Activated CD8-positive, alpha-beta T cell treated with anti-CD3 and anti-CD28 coated beads, Interleukin-2, amount 10 ng/mL, durations not matched to agents 7 days and 5 days (primary cell): ENCODE measurements at regions of chr14 and their contacts with region 1.

Region 1: DNA sequence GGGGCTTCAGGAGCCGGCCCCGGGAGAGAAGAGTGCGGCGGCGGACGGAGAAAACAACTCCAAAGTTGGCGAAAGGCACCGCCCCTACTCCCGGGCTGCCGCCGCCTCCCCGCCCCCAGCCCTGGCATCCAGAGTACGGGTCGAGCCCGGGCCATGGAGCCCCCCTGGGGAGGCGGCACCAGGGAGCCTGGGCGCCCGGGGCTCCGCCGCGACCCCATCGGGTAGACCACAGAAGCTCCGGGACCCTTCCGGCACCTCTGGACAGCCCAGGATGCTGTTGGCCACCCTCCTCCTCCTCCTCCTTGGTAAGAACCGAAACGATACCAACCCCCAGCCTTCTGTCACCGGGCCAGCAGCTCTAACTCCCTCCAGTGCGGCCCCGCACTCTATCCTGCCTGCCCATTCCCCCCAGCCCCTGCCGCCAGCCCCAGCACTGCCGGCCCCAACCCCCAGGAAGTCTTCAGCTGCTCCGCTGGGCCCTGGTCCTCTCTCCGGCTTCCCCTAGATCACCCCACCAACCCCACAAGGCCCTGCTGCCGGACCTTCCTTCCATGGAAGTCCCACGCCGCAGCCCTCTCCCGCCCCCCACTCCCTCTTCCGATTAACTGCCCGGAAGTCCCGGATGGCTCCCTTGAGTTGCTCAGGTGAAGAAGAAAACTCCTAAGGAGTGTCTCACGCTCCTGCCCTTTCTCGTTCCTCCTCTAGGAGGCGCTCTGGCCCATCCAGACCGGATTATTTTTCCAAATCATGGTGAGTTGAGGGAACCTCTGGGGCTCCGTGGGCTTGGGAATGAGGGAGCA is 693 bp downstream of the LRP10 start:
- DNase-seq: peak; percentile 78
- ATAC-seq: peak; percentile 52
- H3K4me3 Mint-ChIP-seq: peak overlapping the region; percentile 84
- H3K27ac Mint-ChIP-seq: peak overlapping the region; percentile 97
- H3K4me1 Mint-ChIP-seq: peaks cover 24% of the 10 kb centered on the region
- H3K27me3 Mint-ChIP-seq: no peaks in the 10 kb centered on the region

Region 2: GRCh38 chr14:22791301-22791700 is 80.9 kb before region 1 on chr14:
- CTCF ChIA-PET with region 1: no interaction called
- POLR2A ChIA-PET with region 1: no interaction called
- DNase-seq: no peak
- ATAC-seq: no peak
- H3K4me3 Mint-ChIP-seq: no peak overlapping the region
- H3K27ac Mint-ChIP-seq: no peak overlapping the region
- H3K4me1 Mint-ChIP-seq: peaks cover 4% of the 10 kb centered on the region
- H3K27me3 Mint-ChIP-seq: peaks cover 12% of the 10 kb centered on the region

Region 3: DNA sequence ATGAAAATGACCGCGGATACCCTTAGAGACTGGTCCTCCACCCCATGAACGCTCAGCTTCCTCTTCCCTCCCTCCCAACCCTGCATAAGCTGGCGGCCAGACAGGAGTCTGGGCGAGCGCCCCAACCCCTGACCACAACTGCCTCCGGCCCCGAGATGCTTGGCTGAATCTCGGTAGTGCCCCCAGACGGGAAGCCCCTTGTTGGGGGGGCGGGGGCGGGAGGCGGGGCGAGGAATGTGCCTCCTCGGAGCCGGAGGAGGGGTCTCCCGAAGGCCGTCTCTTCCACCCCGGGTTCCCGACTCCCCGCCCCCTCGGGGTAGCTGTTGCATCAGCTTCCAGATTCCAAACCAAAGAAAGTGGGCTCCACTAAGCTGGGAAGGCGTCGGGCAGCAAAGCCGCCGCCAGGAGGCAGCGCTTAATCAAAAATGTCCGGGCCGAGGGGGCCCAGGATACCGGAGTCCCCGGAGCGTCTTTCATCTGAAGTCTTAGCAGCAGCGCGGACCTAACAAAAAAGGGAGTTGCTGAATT is 49.6 kb before region 1 on chr14:
- CTCF ChIA-PET with region 1: interaction called, 590 read pairs
- POLR2A ChIA-PET with region 1: interaction called, 3 read pairs
- DNase-seq: peak; percentile 79
- ATAC-seq: peak; percentile 89
- H3K4me3 Mint-ChIP-seq: peak overlapping the region; percentile 39
- H3K27ac Mint-ChIP-seq: no peak overlapping the region
- H3K4me1 Mint-ChIP-seq: peaks cover 32% of the 10 kb centered on the region
- H3K27me3 Mint-ChIP-seq: peaks cover 24% of the 10 kb centered on the region

Region 4: DNA sequence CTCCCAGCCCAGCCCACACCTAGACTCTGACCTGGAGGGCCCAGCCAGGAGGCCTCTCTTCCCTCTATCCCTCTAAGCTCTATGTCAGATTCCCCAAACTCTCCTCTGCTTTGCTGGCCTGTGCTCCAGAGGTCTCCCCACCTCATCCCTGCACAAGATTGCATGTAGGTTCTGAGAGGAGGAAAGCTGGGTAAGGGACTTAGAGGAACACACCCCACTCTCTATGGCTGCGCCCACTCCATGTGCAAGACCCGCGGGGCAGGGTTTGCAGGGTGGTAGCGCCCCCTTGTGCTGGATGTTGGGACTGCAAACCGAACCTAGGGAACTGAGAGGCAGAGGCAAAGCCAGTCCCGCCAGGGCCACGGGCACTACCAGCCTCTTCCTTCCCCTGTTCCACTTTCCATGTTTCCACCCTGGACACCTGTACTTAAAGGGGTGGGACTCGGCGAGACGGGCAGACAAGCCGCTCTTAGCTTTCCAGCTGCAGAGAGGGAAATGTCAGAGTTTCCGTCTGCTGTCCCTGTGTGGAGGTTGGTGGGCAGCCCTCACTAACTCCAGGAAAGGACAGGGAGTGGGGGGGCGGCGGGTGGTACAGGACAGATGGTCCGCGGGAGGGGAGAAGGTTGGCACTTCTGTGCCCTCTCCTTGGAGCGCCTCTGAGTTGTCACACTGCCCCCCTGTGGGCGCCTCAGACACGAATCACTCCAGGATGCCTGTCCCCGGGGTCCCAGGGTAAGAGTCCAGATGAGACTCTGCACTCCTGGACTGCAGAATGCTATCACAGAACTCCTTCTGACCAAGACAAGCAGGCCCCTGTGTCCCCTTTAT is 19.1 kb before region 1 on chr14:
- CTCF ChIA-PET with region 1: interaction called, 89 read pairs
- POLR2A ChIA-PET with region 1: no interaction called
- DNase-seq: peak; percentile 91
- ATAC-seq: peak; percentile 87
- H3K4me3 Mint-ChIP-seq: peak overlapping the region; percentile 72
- H3K27ac Mint-ChIP-seq: peak overlapping the region; percentile 61
- H3K4me1 Mint-ChIP-seq: peaks cover 44% of the 10 kb centered on the region
- H3K27me3 Mint-ChIP-seq: peaks cover 18% of the 10 kb centered on the region

Region 5: GRCh38 chr14:22900081-22900799 is 28.0 kb after region 1 on chr14:
- CTCF ChIA-PET with region 1: interaction called, 22 read pairs
- POLR2A ChIA-PET with region 1: interaction called, 8 read pairs
- DNase-seq: peak; percentile 68
- ATAC-seq: peak; percentile 75
- H3K4me3 Mint-ChIP-seq: no peak overlapping the region
- H3K27ac Mint-ChIP-seq: peak overlapping the region; percentile 4
- H3K4me1 Mint-ChIP-seq: peaks cover 13% of the 10 kb centered on the region
- H3K27me3 Mint-ChIP-seq: no peaks in the 10 kb centered on the region